SK-N-SH (cell line): ENCODE measurements at regions of chr1 and their contacts with region 1.

Region 1: DNA sequence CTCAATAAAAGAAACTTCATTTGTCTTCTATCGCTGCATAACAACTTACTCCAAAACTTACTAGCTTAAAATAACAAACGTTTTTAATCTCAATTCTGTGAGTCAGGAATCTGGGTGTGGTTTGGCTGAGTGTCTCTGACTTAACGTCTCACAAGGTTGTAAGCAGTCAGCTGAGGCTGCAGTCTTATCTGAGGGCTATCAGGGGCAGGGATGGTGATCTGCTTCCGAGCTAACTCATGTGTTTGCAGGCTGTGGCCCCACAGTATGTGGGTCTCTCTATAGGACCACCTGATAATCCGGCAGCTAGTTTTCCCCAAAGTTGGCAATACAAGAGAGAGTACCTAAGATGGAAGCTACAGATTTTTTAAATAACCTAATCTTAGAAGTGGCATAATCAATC is 234.2 kb upstream of the FGGY start:
- DNase-seq: no peak
- H3K4me3 ChIP-seq: no peak overlapping the region
- H3K27ac ChIP-seq: no peak overlapping the region
- H3K4me1 ChIP-seq: peaks cover under 1 to 13% of the 10 kb centered on the region in 2 experiments; a peak in 3 of 4 replicates
- H3K27me3 ChIP-seq: no peaks in the 10 kb centered on the region
- CTCF ChIP-seq: no peak
- EP300 ChIP-seq: no peak
- RAD21 ChIP-seq: no peak

Region 2: DNA sequence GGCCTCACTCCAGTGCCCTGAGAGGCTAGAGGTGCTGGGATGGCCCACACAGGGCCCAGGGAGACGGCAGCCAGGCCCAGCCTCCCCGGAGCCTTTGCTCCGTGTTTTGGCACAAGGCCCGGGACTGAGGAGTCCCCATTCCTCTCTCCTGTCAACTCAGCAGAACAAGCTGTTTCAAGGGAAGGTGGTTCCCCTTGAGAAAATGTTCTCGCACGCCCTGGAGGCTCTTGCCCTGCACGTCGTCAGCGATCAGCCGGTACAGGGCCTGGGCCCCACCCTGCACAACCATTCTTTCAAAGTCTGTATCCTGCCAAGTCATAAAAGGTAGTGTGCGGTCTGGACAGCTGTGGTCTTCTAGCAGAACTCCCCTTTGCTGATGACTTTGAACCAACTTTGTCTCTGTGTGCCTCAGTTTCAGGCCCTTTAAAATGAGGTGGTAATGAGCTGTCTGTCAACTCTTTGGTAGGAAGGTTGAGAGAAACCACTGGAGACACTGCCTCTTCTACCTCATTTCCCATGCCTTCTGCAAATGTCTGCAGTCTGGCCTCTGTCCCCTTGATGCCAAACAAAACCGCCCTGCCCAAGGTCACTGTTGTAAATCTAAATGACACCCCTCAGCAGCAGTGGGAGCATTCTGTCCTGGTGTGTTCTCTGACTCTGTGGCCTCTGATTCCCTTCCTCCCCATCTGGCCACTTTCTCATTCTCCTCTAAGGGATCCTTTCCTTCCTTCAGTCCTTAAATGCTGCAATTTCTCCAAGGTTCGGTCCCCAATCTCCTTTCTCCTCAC is 140.2 kb before region 1 on chr1:
- CTCF ChIA-PET with region 1: no interaction called
- POLR2A ChIA-PET with region 1: no interaction called
- DNase-seq: no peak
- H3K4me3 ChIP-seq: no peak overlapping the region
- H3K27ac ChIP-seq: no peak overlapping the region
- H3K4me1 ChIP-seq: 0 out of 4 replicates have a peak, but pooled peaks cover 0 to 4% of the 10 kb centered on the region in 2 experiments
- H3K27me3 ChIP-seq: no peaks in the 10 kb centered on the region
- CTCF ChIP-seq: no peak
- EP300 ChIP-seq: no peak
- RAD21 ChIP-seq: no peak

Region 3: GRCh38 chr1:59013276-59013927 is 49.3 kb before region 1 on chr1:
- CTCF ChIA-PET with region 1: no interaction called
- POLR2A ChIA-PET with region 1: no interaction called
- DNase-seq: no peak
- H3K4me3 ChIP-seq: no peak overlapping the region
- H3K27ac ChIP-seq: no peak overlapping the region
- H3K4me1 ChIP-seq: peaks cover 0 to 24% of the 10 kb centered on the region in 2 experiments; a peak in 2 of 4 replicates
- H3K27me3 ChIP-seq: no peaks in the 10 kb centered on the region
- CTCF ChIP-seq: no peak
- EP300 ChIP-seq: no peak
- RAD21 ChIP-seq: no peak

Region 4: DNA sequence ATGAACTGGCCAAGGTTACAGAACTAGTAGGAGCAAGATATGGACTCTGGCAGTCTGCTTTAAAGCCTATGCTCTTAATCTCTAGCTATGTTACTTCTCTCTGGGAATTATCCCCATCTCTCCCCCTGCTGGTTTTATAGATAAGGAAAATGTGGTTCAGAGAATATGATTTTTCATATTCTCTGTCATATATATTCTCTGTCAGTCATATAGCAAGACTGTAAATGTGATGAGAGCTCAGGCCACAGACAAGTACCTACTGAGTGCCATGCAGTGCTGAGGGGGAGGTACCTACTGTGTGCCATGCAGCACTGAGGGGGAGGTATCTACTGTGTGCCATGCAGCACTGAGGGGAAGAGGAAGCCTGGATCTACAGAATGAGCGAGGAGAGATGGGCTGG is 13.9 kb after region 1 on chr1:
- CTCF ChIA-PET with region 1: interaction called, 11 read pairs
- POLR2A ChIA-PET with region 1: interaction called, 5 read pairs
- DNase-seq: peak; percentile 39
- H3K4me3 ChIP-seq: no peak overlapping the region
- H3K27ac ChIP-seq: no peak overlapping the region
- H3K4me1 ChIP-seq: peaks cover 7 to 20% of the 10 kb centered on the region in 2 experiments
- H3K27me3 ChIP-seq: no peaks in the 10 kb centered on the region
- CTCF ChIP-seq: peak; percentile 49
- EP300 ChIP-seq: no peak
- RAD21 ChIP-seq: peak; percentile 55

Region 5: GRCh38 chr1:59186656-59187055 is 123.9 kb after region 1 on chr1:
- CTCF ChIA-PET with region 1: no interaction called
- POLR2A ChIA-PET with region 1: no interaction called
- DNase-seq: no peak
- H3K4me3 ChIP-seq: no peak overlapping the region
- H3K27ac ChIP-seq: no peak overlapping the region
- H3K4me1 ChIP-seq: no peaks in the 10 kb centered on the region
- H3K27me3 ChIP-seq: no peaks in the 10 kb centered on the region
- CTCF ChIP-seq: no peak
- EP300 ChIP-seq: no peak
- RAD21 ChIP-seq: no peak

Region 6: GRCh38 chr1:59332983-59333382 is 270.2 kb after region 1 on chr1:
- CTCF ChIA-PET with region 1: no interaction called
- POLR2A ChIA-PET with region 1: no interaction called
- DNase-seq: no peak
- H3K4me3 ChIP-seq: no peak overlapping the region
- H3K27ac ChIP-seq: peak overlapping the region in 1 of 2 experiments; percentile 32; a peak in 1 of 4 replicates
- H3K4me1 ChIP-seq: no peaks in the 10 kb centered on the region
- H3K27me3 ChIP-seq: no peaks in the 10 kb centered on the region
- CTCF ChIP-seq: no peak
- EP300 ChIP-seq: 0 out of 4 replicates have a peak, but pooled peaks of 1 of the 2 experiments have one; percentile 12
- RAD21 ChIP-seq: no peak